Activated CD4-positive, alpha-beta T cell treated with anti-CD3 and anti-CD28 coated beads for 36 hours (primary cell): ENCODE measurements at regions of chr3 and their contacts with region 1.

Region 1: DNA sequence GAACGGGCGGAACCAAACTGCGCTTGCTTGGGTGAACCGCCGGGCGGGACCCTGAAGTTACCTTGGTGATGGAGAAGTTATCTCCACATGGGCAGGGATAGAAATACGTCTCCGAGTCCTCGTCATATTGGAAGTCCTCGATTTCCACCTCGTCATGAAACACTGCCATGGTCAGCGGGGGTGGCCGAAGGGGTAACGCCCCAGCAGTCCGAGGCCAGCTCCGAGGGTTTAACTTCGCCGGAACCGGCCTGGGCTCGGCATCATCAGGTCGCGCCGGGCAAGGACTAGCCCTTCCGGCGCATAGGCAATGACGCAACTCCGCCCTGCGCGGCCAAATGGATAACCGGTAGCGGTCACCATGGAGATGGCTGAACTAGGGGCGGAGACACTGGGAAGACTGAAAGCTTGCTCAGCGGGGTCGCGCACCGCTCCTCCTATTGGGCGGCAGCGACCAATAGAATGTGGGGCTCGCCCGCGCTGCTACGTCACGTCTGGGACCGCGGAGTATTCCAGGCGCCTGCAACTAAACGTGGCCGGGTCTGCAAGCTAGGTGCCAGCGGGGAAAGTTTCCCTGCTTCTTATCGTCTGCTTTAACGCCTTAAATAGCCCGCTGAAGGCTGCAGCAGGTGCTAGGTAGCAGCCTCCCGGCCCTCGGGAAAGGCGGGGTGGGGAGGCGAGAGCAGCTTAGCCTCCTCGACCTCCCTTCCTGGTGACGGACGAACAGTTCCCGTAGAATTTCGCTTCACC is at the starts of genes DPH3 and OXNAD1:
- DNase-seq: peak; percentile 100
- ATAC-seq: peak; percentile 98
- H3K4me3 Mint-ChIP-seq: peak within 1 kb of the TSS; percentile 82
- H3K27ac Mint-ChIP-seq: peak within 1 kb of the TSS; percentile 98
- H3K4me1 Mint-ChIP-seq: peaks cover 35% of the 10 kb centered on the region
- H3K27me3 Mint-ChIP-seq: no peaks in the 10 kb centered on the region
- total RNA-seq, gene DPH3: 13.0 to 17.8 TPM
- total RNA-seq, gene OXNAD1: 27.7 to 34.6 TPM

Region 2: DNA sequence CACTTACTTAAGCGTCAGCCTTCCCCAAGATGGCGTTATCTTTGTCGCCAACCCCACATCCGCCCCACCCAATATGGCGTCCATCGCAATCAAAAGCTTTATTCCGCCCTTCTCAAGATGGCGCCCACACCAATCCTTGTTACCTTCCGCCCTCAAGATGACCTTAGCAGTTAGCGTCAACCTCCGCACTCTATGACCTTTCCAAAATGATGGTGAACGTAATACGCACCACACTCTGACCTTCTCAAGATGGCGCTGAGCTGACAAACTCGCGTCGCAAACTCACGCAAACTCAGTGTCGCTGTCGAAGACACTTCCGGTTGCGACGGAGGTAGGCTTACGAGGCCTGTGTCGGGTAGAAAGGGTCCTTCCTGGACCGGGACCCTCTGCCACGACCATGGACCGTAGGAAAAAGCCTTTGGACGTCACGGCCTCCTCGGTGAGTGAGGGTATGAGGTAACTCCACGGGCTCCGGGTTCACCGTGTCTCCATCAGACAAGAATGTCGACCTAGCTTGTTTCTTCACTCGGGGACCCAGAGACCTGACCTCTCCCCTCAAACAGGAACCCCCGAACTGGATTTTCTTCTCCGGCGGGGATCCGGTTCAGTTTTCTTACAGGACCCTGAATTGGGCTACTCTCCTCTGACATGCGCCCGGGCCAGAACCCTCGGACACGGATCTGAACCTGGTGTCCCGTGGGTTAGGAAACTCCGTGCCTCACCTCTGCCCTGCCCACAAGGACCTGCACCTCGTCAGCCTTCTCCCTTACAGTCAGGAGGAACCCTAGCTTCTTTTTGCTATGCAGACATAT is 1613.2 kb before region 1 on chr3 and contains the start of gene CCDC174:
- CTCF ChIA-PET with region 1: no interaction called
- POLR2A ChIA-PET with region 1: no interaction called
- intact Hi-C with region 1: loop called in 1 of 2 experiments (anchors 2 kb)
- DNase-seq: peak; percentile 95
- ATAC-seq: peak; percentile 99
- H3K4me3 Mint-ChIP-seq: peak within 1 kb of the TSS; percentile 93
- H3K27ac Mint-ChIP-seq: peak within 1 kb of the TSS; percentile 96
- H3K4me1 Mint-ChIP-seq: peaks cover 40% of the 10 kb centered on the region
- H3K27me3 Mint-ChIP-seq: no peaks in the 10 kb centered on the region
- total RNA-seq, gene CCDC174: 16.2 to 18.2 TPM

Region 3: GRCh38 chr3:15859507-15860013 is 405.3 kb before region 1 on chr3:
- CTCF ChIA-PET with region 1: no interaction called
- POLR2A ChIA-PET with region 1: no interaction called
- intact Hi-C with region 1: loop called in 1 of 2 experiments (anchors 2 kb)
- DNase-seq: peak; percentile 86
- ATAC-seq: peak; percentile 85
- H3K4me3 Mint-ChIP-seq: peak overlapping the region; percentile 83
- H3K27ac Mint-ChIP-seq: peak overlapping the region; percentile 83
- H3K4me1 Mint-ChIP-seq: peaks cover 42% of the 10 kb centered on the region
- H3K27me3 Mint-ChIP-seq: no peaks in the 10 kb centered on the region

Region 4: DNA sequence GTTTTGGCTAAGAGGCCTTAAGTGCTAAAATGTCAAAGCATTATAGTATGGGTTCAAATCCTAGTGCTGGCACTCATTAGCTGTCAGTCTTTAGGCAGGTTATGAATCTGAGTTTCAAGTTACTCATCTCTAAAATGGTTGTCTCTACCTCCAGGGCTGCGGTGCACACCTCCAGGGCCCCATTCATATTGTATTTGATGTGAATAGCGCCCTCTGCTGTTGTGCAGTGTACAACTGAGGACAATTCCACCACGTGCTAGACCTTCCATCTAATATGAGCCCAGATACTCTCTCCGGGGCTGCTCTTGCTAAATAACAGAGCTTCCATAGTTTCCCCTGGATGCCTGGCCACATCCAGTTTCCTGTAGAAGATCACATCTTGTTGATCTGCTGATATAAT is 54.4 kb after region 1 on chr3:
- CTCF ChIA-PET with region 1: interaction called, 50 read pairs
- POLR2A ChIA-PET with region 1: no interaction called
- intact Hi-C with region 1: loop called (anchors 1 kb)
- DNase-seq: peak; percentile 94
- ATAC-seq: peak; percentile 94
- H3K4me3 Mint-ChIP-seq: peak overlapping the region; percentile 3
- H3K27ac Mint-ChIP-seq: peak overlapping the region; percentile 90
- H3K4me1 Mint-ChIP-seq: peaks cover 74% of the 10 kb centered on the region
- H3K27me3 Mint-ChIP-seq: no peaks in the 10 kb centered on the region

Region 5: DNA sequence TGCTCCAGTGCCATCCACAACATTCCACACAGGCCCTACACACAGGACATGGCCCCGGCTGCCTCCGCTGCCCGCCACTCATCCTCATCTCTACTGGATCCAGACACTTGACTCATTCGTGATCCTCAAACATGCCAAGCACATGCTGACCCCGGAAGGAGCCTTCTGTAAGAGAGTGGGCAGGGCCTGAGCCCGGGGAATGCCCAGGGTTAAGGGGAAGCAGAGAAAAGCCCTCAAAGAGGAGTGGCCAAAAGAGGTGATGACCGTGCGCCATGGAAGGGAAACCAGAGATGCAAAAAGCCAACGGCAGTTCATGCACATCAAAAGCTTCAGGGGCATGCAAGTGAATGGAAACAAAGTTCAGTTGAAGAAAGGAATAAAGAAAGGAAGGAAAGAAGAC is 202.5 kb after region 1 on chr3:
- CTCF ChIA-PET with region 1: no interaction called
- POLR2A ChIA-PET with region 1: no interaction called
- intact Hi-C with region 1: no loop called
- DNase-seq: peak; percentile 78
- ATAC-seq: peak; percentile 79
- H3K4me3 Mint-ChIP-seq: peak overlapping the region; percentile 50
- H3K27ac Mint-ChIP-seq: peak overlapping the region; percentile 92
- H3K4me1 Mint-ChIP-seq: peaks cover 66% of the 10 kb centered on the region
- H3K27me3 Mint-ChIP-seq: no peaks in the 10 kb centered on the region

Region 6: GRCh38 chr3:16600780-16601539 is 336.1 kb after region 1 on chr3:
- CTCF ChIA-PET with region 1: interaction called, 9 read pairs
- POLR2A ChIA-PET with region 1: no interaction called
- intact Hi-C with region 1: loop called in 1 of 2 experiments (anchors 5 kb)
- DNase-seq: peak; percentile 90
- ATAC-seq: no peak
- H3K4me3 Mint-ChIP-seq: no peak overlapping the region
- H3K27ac Mint-ChIP-seq: no peak overlapping the region
- H3K4me1 Mint-ChIP-seq: peaks cover 22% of the 10 kb centered on the region
- H3K27me3 Mint-ChIP-seq: peaks cover 20% of the 10 kb centered on the region

Region 7: GRCh38 chr3:17233398-17233800 is 968.5 kb after region 1 on chr3:
- CTCF ChIA-PET with region 1: no interaction called
- POLR2A ChIA-PET with region 1: no interaction called
- intact Hi-C with region 1: loop called (anchors 5 to 10 kb)
- DNase-seq: peak; percentile 47
- ATAC-seq: peak; percentile 91
- H3K4me3 Mint-ChIP-seq: no peak overlapping the region
- H3K27ac Mint-ChIP-seq: no peak overlapping the region
- H3K4me1 Mint-ChIP-seq: peaks cover 24% of the 10 kb centered on the region
- H3K27me3 Mint-ChIP-seq: no peaks in the 10 kb centered on the region